ENCODE measurements at regions of chr9 and their contacts with region 1.

Region 1: DNA sequence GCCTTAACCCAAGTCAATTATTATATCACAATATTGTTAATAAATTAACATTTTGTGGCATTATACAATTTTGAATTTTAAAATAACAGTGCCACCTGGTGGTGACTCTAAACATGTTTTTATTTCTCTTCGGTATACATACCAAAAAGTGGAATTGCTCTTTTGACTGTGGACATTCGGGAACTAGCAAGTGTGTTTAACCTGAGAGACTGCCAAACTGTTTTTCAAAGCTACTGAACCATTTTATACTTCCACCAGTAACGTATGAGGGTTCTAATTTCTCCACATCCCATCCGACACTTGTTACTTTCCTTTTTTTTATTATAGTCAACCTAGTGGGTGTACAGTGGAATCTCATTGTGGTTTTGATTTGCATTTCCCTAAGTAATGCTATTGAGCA is 18.3 kb upstream of the HSDL2 start:
- DNase-seq: no peak
- ATAC-seq: peak; percentile 63

Region 2: GRCh38 chr9:112091810-112092209 is 269.8 kb before region 1 on chr9:
- intact Hi-C with region 1: loop called (anchors 5 to 10 kb)
- DNase-seq: no peak
- ATAC-seq: no peak

Region 3: DNA sequence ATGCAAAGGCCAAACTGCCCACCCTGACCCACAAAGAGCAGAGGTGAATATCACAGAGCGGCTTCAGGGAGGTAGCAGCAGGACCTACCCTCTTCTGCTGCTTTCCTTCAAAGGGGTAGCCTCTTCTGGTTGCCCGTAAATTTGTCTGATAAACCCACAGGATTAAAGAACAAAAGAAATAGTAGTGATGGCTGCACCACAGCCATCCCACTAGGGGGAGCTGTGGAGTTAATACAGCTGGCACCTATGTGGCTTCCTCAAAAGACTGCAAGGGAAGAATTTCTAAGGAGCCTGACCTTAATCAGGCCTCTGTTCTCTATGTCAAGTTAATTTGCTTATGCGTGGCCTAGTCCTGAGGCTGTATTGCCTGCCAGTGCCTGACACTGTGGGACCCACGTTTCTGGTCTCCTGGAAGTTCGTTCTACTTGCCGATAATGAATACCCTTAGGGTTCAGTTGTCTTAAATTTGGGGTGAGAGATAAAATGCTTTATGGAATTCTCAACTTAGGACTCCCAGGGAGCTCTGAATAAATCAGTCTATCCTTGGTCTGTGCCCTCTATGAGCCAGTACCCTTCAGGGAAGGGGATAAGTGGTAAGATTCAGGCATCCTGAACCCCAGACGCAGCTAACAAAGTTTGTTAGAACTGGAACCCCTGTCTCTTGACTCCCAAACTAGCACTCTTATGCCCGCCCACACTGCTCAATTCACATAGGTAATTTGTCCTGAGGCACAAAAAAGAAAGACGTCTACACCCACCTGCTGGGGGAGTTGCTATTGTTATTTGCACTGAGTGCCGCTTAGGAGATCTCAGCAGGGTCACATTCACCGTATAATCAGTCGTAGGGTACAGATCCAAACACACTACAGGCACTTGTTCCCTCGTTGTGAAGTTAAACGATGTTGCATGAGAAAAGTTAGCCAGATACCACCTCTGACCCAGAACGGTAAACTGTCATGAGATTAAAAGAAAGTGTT is 263.6 kb before region 1 on chr9:
- intact Hi-C with region 1: loop called (anchors 5 to 10 kb)
- DNase-seq: peak in 1 of 2 donors; percentile 59
- ATAC-seq: peak; percentile 78